WTC11 (cell line): ENCODE measurements at regions of chr1 and their contacts with region 1.

Region 1: DNA sequence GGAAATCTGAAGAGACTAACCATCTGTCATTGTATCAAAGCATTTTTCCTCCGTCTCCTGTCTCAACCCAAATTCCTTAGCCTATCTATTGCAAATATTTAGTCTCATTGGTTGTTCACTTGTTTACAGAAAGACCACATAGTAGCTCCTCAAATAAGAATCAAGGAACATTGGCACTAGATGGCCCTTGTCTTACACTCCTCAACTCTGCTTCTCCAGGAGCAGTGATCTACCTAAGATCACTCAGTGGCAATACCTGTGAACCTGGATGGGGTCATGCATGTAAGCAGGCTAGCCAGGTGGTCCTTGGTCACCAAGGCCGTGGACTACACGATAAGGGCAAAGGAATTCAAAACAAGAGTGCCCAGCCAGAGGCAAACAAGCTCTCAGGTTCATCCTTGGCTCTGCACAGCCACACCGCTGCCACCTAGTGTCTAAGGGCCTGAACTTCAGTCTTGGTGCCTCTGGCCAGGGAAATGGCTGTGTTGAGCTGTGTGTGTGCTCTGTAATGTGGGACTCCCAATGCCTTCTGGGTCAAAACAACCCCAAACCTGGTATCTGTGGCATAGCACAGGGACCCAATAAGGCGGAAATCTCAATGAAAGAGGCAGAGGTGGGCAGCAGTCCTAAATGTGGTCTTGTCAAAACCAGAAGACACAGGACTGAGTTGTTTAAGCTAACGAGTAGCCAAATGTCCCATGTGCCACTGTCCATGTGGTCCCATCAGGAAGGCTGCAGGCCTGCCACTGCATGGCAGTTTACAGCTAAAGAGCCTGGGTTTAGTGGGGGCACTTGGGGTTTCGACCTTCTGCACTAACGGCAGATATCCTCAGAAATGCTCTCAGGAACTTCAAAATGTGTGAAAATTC is 54.5 kb downstream of the GPR161 start:
- DNase-seq: peak; percentile 84
- ATAC-seq: peak; percentile 92
- H3K4me3 Mint-ChIP-seq: no peak overlapping the region
- H3K27ac Mint-ChIP-seq: no peak overlapping the region
- H3K4me1 Mint-ChIP-seq: peaks cover 3% of the 10 kb centered on the region; the same call in 1 of the 2 replicates
- H3K27me3 Mint-ChIP-seq: no peaks in the 10 kb centered on the region
- CTCF ChIP-seq: peak; percentile 79

Region 2: GRCh38 chr1:167797015-167797414 is 285.2 kb before region 1 on chr1:
- CTCF ChIA-PET with region 1: interaction called, 14 read pairs
- POLR2A ChIA-PET with region 1: no interaction called
- DNase-seq: peak; percentile 31
- ATAC-seq: peak; percentile 92
- H3K4me3 Mint-ChIP-seq: no peak overlapping the region
- H3K27ac Mint-ChIP-seq: peak overlapping the region; percentile 92
- H3K4me1 Mint-ChIP-seq: peaks cover 29% of the 10 kb centered on the region
- H3K27me3 Mint-ChIP-seq: no peaks in the 10 kb centered on the region; the same call in 1 of the 2 replicates
- CTCF ChIP-seq: no peak

Region 3: GRCh38 chr1:167936068-167936929 is 145.9 kb before region 1 on chr1 and contains the start of gene DCAF6:
- CTCF ChIA-PET with region 1: interaction called, 10 read pairs
- POLR2A ChIA-PET with region 1: interaction called, 6 read pairs
- DNase-seq: peak; percentile 96
- ATAC-seq: peak; percentile 87
- H3K4me3 Mint-ChIP-seq: peak within 1 kb of the TSS; percentile 92
- H3K27ac Mint-ChIP-seq: peak within 1 kb of the TSS; percentile 100
- H3K4me1 Mint-ChIP-seq: peaks cover 21% of the 10 kb centered on the region
- H3K27me3 Mint-ChIP-seq: no peaks in the 10 kb centered on the region
- CTCF ChIP-seq: no peak
- total RNA-seq, gene DCAF6: 13.5 to 17.4 TPM (median 16.1 TPM) in 3 replicates

Region 4: DNA sequence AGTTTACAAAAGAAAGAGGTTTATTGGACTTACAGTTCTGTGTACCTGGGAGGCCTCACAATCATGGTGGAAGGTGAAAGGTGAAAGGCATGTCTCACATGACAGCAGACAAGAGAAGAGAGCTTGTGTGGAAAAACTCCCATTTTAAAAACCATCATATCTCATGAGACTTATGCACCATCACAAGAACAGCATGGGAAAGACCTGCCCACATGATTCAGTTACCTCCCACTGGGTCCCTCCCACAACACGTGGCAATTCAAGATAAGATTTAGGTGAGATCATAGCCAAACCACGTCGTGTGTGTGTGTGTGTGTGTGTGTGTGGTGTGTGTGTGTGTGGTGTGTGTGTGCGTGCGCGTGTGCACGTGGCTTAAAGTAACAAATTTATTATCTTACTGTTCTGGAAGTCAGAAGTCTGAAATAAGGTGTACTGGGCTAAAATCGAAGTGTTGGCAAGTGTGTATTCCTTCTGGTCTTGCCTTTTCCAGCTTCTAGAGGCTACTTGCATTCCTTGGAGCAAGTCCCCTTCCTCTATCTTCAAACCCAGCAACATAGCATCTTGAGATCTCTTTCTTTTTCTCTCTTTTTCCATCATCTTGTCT is 97.3 kb before region 1 on chr1:
- CTCF ChIA-PET with region 1: no interaction called
- POLR2A ChIA-PET with region 1: no interaction called
- DNase-seq: no peak
- ATAC-seq: no peak
- H3K4me3 Mint-ChIP-seq: no peak overlapping the region
- H3K27ac Mint-ChIP-seq: peak overlapping the region; percentile 55
- H3K4me1 Mint-ChIP-seq: peaks cover 17% of the 10 kb centered on the region
- H3K27me3 Mint-ChIP-seq: no peaks in the 10 kb centered on the region
- CTCF ChIP-seq: no peak

Region 5: DNA sequence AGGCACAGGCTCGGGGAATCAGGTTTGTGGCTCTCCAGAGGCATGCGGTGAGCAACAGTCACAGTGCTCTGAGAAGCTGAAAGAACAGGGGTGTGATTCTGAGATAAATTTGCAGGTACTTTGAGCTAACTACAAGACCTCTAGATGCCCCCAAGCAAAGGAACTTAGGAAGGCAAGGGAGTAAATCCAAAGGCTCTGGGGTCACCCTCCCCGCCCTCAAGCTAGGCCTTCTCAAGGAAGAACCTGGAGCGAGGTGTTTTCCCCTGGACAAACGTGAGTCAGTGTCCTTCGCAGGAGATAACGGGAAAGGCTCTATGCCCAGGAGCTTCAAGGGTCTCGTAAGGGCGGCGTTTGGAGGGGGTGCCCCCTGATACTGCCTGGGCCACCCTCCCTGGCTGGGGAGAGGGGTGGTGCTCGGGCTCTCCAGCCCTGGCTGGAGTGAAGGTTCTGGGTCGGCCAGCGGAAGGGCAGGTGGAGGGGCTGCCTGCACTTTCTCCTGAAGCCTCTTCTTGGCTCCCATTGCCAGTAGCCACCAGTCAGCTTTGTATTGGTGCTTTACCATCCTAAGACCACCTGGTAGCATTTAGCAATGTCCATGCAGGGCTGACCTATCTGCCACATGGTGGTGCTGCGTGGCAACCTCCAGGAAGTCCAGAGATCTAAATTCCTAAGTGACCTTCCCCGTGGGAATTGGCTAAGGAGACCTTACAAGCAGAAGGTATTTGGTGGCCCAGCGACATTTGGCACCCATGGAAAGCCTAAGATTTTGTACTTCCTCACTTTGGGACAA is 10.5 kb after region 1 on chr1:
- CTCF ChIA-PET with region 1: interaction called, 49 read pairs
- POLR2A ChIA-PET with region 1: no interaction called
- DNase-seq: no peak
- ATAC-seq: peak; percentile 66
- H3K4me3 Mint-ChIP-seq: no peak overlapping the region
- H3K27ac Mint-ChIP-seq: no peak overlapping the region
- H3K4me1 Mint-ChIP-seq: peaks cover 2% of the 10 kb centered on the region; the same call in 1 of the 2 replicates
- H3K27me3 Mint-ChIP-seq: no peaks in the 10 kb centered on the region
- CTCF ChIP-seq: no peak

Region 6: DNA sequence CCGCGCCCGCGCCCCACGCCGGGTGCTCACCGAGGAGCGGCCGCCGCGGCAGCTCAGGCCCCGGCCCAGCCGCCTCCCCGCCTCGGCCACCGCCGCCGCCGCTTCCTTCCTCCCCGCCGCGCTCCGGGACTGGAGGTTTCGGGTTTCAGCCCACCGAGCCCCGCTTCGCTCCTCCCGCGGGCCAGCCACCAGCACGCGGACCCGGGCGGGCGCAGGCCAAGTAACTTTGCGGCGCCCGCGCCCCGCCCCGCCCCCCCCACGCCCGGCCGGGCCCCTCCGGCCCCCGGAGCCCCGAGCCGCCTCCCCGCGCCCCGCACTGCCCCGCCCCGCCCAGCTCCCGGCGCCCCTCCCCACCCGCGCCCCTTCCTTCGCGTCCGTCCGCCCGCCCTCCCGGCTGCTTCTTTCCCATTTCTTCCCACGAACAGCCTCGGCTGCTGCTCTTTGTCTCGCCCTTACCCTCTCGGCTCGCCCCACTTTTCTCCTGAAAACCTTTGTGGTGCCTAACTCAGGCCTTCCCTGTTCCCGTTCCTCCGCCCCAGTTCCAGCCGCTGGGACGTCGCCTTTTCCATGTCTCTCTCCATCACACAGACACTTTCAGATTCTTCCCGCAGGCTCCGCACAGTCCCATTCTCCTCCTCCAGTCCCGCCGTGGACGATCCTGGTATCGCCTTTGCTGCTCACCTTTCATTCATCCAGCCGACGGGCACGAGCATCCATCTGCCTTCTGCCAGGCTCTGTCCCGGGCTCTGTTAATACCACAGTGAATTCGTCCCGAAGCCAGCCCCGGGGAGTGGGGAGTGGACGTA is 54.7 kb after region 1 on chr1 and contains the start of gene GPR161:
- CTCF ChIA-PET with region 1: interaction called, 20 read pairs
- POLR2A ChIA-PET with region 1: no interaction called
- DNase-seq: peak; percentile 77
- ATAC-seq: peak; percentile 58
- H3K4me3 Mint-ChIP-seq: peak within 1 kb of the TSS; percentile 96
- H3K27ac Mint-ChIP-seq: peak within 1 kb of the TSS; percentile 87
- H3K4me1 Mint-ChIP-seq: peaks cover 22% of the 10 kb centered on the region
- H3K27me3 Mint-ChIP-seq: peaks cover 41% of the 10 kb centered on the region
- CTCF ChIP-seq: no peak
- total RNA-seq, gene GPR161: 11.0 to 11.6 TPM (median 11.2 TPM) in 3 replicates

Region 7: DNA sequence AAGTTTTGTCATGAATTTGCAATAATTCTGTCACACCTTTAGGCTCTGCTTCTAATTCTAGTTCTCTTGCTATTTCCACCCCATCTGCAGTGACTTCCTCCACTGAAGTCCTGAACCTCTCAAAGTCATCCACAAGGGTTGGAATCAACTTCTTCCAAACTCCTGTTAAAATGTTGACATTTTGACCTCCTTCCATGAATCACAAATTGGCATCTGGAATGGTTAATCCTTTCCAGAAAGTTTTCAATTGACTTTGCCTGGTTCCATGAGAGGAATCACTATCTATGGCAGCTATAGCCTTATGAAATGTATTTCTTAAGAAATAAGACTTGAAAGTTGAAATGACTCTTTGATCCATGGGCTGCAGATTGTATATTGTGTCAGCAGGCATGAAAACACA is 123.9 kb after region 1 on chr1:
- CTCF ChIA-PET with region 1: no interaction called
- POLR2A ChIA-PET with region 1: no interaction called
- DNase-seq: no peak
- ATAC-seq: no peak
- H3K4me3 Mint-ChIP-seq: no peak overlapping the region
- H3K27ac Mint-ChIP-seq: no peak overlapping the region
- H3K4me1 Mint-ChIP-seq: peaks cover 5% of the 10 kb centered on the region; the same call in 1 of the 2 replicates
- H3K27me3 Mint-ChIP-seq: no peaks in the 10 kb centered on the region
- CTCF ChIP-seq: no peak

Region 8: DNA sequence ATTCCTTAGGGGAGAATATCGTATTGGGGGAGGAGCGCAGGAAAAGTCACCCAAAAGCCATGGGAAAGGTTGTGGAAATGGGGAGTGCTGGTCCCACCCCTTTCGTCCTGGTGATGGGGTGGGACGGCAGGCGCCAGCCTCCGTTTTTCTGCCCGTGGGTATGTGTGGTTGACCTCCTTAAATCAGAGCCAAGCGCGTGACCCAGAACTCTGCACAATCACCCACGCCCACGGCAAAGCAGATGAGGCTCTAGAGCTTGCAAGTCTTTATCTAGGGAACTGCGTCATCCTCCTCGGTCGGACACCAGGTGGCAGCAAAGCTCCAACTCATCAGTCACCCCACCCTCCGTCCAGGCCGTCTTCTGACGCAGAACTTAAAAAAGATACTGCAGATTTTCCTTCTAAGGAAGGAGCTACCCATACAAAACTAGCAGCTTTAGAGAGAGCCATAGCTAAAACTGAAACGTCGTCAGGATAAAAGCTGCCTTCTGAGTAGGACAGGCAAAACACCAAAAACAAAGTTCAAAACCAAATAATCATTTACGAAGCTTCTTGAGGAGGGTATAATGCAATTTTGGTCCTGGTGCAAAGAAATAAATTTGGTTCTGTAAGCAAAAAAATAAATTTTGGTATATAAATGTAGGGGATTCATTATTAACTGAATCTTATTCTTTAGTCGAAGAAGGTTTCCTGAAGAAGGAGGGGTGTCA is 260.5 kb after region 1 on chr1:
- CTCF ChIA-PET with region 1: interaction called, 13 read pairs
- POLR2A ChIA-PET with region 1: no interaction called
- DNase-seq: peak; percentile 84
- ATAC-seq: peak; percentile 99
- H3K4me3 Mint-ChIP-seq: peak overlapping the region; percentile 63
- H3K27ac Mint-ChIP-seq: no peak overlapping the region
- H3K4me1 Mint-ChIP-seq: peaks cover 6% of the 10 kb centered on the region
- H3K27me3 Mint-ChIP-seq: no peaks in the 10 kb centered on the region
- CTCF ChIP-seq: peak; percentile 81